T-cell (primary cell): ENCODE measurements at regions of chr13 and their contacts with region 1.

Region 1: DNA sequence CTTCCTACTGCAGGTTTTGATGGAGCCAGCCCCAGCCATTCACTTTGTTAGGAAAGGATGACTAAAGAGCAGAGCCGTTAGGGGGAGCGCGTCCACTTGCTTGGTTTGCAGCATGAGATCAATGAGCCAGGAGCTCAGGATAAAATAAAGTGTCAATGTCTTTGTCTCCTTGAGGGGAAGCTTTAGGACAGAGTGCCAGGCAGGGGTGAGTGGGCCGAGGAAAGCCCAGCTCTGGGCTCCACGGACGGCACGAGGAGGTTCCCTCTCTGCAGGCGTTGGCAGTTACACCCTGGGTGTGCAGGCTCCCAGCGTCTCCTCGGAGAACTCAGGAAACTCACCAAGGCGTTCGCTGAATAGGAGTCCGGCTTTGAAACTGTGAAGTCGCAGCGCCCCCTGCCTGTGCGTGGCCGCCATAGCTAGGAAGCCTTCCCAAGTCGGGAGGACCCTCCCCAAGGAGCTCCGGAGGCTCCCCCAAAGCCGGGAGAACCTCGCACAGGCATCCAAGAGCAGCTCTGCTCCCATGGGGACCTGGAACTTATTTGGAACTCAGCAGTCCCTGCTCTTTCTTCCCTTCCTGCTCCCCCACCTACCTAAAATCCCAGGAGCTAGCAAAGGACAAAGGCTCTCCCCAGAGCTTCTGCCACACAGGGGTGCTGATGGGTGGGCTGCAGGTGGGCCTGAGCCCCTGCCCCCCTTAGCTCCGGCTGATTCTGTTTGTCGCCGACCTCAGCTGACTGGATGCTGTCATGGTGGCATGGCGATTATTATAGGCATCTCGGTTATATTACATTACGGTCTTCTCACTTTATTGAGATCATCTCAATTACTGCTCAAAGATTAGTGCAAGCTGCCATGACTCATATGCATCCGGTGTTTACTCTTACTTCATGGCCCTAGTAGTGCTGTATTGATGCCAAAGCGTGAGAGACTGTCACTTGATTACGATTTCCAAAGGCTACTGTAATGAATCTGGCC is 34.4 kb downstream of the GSX1 start:
- DNase-seq: peak; percentile 1 to 79 (median 52)
- ATAC-seq: peak; percentile 63 to 72 (median 64)
- H3K4me3 ChIP-seq: no peak overlapping the region
- H3K4me3 Mint-ChIP-seq: no peak overlapping the region
- H3K27ac ChIP-seq: no peak overlapping the region
- H3K27ac Mint-ChIP-seq: peak overlapping the region in 1 of 2 donors; percentile 27
- H3K4me1 ChIP-seq: peaks cover 0 to 12% of the 10 kb centered on the region in 2 experiments
- H3K4me1 Mint-ChIP-seq: peaks cover 6 to 11% (median 6%) of the 10 kb centered on the region in 3 donors
- H3K27me3 ChIP-seq: peaks cover 28 to 56% of the 10 kb centered on the region in 2 experiments
- H3K27me3 Mint-ChIP-seq: peaks cover 64 to 76% of the 10 kb centered on the region in 2 donors

Region 2: DNA sequence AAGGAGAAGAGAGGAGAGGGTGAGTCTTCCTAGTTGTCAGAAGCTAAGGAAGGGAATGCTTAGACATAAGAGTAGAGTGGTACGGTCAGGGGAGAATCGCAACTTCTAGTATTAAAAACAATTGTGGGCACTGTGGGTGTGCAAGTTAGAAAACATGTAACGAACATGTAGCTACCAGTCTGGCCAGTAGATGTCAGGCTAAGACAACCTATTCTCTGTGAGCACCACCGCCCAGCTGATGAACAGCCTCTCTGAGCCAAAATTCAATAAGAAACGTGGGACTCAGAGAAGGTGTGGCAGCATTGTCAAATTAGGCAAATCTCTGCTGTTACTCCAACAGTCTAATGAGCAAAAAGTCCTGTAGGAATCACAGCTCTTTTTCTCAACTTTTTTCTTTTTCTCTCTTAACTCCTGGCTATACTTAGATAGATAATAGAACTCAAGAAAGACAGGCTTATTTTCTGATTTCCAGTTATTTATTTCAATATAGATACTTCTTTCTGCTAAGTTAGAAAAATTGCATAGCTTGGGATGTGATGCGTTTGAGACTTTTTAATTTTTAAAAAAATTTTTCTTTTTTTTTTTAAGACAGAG is 841.3 kb before region 1 on chr13:
- CTCF ChIA-PET with region 1: interaction called, 9 to 24 read pairs
- POLR2A ChIA-PET with region 1: no interaction called
- DNase-seq: peak; percentile 22 to 86 (median 59)
- ATAC-seq: peak; percentile 83 to 86 (median 84)
- H3K4me3 ChIP-seq: no peak overlapping the region
- H3K4me3 Mint-ChIP-seq: no peak overlapping the region
- H3K27ac ChIP-seq: no peak overlapping the region
- H3K27ac Mint-ChIP-seq: no peak overlapping the region
- H3K4me1 ChIP-seq: no peaks in the 10 kb centered on the region
- H3K4me1 Mint-ChIP-seq: no peaks in the 10 kb centered on the region
- H3K27me3 ChIP-seq: peaks cover 0 to 20% of the 10 kb centered on the region in 2 experiments
- H3K27me3 Mint-ChIP-seq: peaks cover 3 to 23% of the 10 kb centered on the region in 2 donors

Region 3: DNA sequence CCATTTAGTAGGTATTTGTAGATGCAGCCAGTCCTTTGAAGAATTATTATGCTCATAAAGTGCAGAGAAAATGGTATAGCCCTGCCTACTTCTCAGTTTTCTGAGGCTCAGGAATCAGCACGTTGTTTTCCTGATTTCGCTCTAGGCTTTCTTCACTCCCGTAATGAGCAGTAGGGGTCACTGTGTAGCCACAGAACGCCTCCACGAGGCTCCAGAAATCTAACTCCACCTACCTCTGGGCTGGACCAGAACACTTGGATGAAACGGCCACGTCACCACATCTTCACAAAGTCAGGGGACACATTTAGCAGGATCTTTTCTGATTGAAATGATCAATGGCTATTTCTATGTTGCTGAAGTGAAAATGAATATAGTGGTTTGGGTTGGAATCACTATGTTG is 452.0 kb before region 1 on chr13:
- CTCF ChIA-PET with region 1: interaction called, 25 to 61 read pairs
- POLR2A ChIA-PET with region 1: no interaction called
- DNase-seq: peak in 33 of 35 experiments; percentile 8 to 75 (median 35)
- ATAC-seq: peak; percentile 79 to 89 (median 82)
- H3K4me3 ChIP-seq: no peak overlapping the region
- H3K4me3 Mint-ChIP-seq: no peak overlapping the region
- H3K27ac ChIP-seq: no peak overlapping the region
- H3K27ac Mint-ChIP-seq: no peak overlapping the region
- H3K4me1 ChIP-seq: peaks cover 0 to 5% of the 10 kb centered on the region in 2 experiments
- H3K4me1 Mint-ChIP-seq: peaks cover 2 to 11% (median 9%) of the 10 kb centered on the region in 3 donors
- H3K27me3 ChIP-seq: peaks cover 11 to 21% of the 10 kb centered on the region in 2 experiments
- H3K27me3 Mint-ChIP-seq: peaks cover 22% of the 10 kb centered on the region in 2 donors

Region 4: DNA sequence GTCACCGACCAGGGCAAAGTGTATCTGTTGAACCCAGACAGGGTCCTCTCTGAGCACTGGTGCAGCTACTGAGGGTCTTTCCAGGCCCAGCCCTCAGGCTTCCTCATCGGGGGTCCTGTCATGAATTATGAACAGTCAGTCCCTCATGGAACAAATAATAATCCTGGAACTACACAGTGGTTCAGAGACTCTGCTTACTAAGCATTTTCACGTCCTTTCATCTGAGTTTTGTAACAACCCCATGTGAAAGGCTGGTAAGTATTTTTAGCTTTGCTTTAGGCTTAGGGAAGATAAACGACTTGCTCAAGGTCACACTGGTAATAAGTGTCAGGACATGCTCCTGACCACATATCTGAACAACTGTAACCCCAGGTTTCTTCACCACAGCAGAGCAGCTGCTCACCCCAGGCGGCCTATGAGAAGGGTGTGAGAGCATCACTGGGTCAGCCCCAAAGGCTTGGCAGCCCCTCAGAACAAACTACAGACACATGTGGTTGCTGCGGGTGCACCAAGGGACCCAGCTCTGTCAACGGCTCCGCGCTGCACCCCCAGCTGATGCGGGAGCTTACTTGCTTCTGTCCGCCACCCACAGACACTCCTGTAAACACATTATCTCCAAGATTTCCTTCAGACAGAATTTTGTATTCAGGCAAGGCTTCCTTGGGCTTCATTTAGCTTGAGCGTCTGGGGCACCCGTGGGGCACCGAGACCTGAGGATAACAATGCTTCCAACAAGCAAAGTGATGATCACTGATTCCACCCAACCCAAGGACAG is 53.8 kb before region 1 on chr13:
- CTCF ChIA-PET with region 1: interaction called, 7 to 12 read pairs
- POLR2A ChIA-PET with region 1: no interaction called
- DNase-seq: no peak
- ATAC-seq: no peak
- H3K4me3 ChIP-seq: no peak overlapping the region
- H3K4me3 Mint-ChIP-seq: no peak overlapping the region
- H3K27ac ChIP-seq: no peak overlapping the region
- H3K27ac Mint-ChIP-seq: no peak overlapping the region
- H3K4me1 ChIP-seq: no peaks in the 10 kb centered on the region
- H3K4me1 Mint-ChIP-seq: no peaks in the 10 kb centered on the region
- H3K27me3 ChIP-seq: peaks cover 8 to 45% of the 10 kb centered on the region in 2 experiments
- H3K27me3 Mint-ChIP-seq: peaks cover 56 to 67% of the 10 kb centered on the region in 2 donors

Region 5: GRCh38 chr13:27839809-27840467 is 13.3 kb after region 1 on chr13:
- CTCF ChIA-PET with region 1: interaction called, 3 to 10 read pairs
- POLR2A ChIA-PET with region 1: no interaction called
- DNase-seq: no peak
- ATAC-seq: no peak
- H3K4me3 ChIP-seq: no peak overlapping the region
- H3K4me3 Mint-ChIP-seq: no peak overlapping the region
- H3K27ac ChIP-seq: no peak overlapping the region
- H3K27ac Mint-ChIP-seq: no peak overlapping the region
- H3K4me1 ChIP-seq: no peaks in the 10 kb centered on the region
- H3K4me1 Mint-ChIP-seq: no peaks in the 10 kb centered on the region
- H3K27me3 ChIP-seq: peaks cover 5 to 13% of the 10 kb centered on the region in 2 experiments
- H3K27me3 Mint-ChIP-seq: peaks cover 50 to 55% of the 10 kb centered on the region in 2 donors